PC-9 (cell line): ENCODE measurements at regions of chr3 and their contacts with region 1.

Region 1: GRCh38 chr3:129095285-129095684 is 26.3 kb downstream of the RAB43 start:
- DNase-seq: no peak
- H3K4me3 ChIP-seq: no peak overlapping the region
- H3K27ac ChIP-seq: no peak overlapping the region
- H3K4me1 ChIP-seq: no peaks in the 10 kb centered on the region
- H3K27me3 ChIP-seq: no peaks in the 10 kb centered on the region
- CTCF ChIP-seq: no peak

Region 2: DNA sequence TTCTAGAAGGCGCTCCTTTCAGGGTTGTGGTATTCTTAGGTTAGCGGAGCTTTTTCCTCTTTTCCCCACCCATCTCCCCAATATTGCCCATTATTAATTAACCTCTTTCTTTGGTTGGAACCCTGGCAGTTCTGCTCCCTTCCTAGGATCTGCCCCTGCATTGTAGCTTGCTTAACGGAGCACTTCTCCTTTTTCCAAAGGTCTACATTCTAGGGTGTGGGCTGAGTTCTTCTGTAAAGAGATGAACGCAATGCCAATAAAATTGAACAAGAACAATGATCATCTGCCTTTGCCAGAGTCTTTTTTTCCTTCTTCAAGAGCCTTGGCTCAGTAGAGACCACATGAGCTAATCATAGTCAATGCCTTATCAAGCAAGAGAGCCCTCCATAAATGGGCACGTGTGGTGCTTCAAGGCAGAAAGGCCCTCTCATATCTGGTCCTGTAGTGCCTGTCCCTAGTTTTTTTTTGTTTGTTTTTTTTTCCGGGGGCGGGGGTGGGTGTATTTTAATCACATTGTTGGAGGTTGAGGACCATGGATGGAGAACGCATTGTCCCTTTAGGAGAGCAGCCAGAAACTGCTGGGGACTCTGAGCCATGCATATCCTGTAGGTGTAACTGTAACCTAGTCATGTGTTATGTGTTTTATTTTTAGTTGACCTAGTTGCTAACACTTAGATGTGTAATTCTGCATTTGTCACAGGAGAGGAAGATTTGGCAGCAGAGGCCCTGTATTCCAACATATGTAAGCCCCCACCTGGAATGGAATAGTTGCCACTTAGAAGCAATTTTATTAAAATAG is 280.6 kb before region 1 on chr3:
- CTCF ChIA-PET with region 1: no interaction called
- POLR2A ChIA-PET with region 1: no interaction called
- intact Hi-C with region 1: no loop called
- DNase-seq: no peak
- H3K4me3 ChIP-seq: no peak overlapping the region
- H3K27ac ChIP-seq: no peak overlapping the region
- H3K4me1 ChIP-seq: no peaks in the 10 kb centered on the region
- H3K27me3 ChIP-seq: no peaks in the 10 kb centered on the region
- CTCF ChIP-seq: no peak

Region 3: DNA sequence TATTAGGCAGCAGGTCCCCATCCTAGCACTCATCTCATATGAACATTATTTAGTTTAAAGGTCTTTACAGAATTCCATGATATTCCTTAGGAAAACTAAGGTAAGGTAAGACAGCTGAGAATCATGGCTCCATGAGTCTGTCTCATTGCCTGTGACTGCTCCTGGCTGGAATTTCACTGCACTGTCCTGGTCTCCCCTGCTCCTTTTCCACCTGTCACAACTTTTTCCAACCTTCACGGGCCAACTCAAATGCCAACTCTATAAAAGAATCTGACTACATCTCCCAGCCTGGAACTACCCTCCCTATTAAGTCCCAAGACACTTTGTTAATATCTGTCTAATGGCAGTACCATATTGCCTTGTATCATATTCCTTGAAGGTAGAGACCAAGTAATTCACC is 80.8 kb after region 1 on chr3:
- CTCF ChIA-PET with region 1: interaction called, 10 read pairs
- POLR2A ChIA-PET with region 1: no interaction called
- intact Hi-C with region 1: no loop called
- DNase-seq: no peak
- H3K4me3 ChIP-seq: no peak overlapping the region
- H3K27ac ChIP-seq: no peak overlapping the region
- H3K4me1 ChIP-seq: peaks cover 22% of the 10 kb centered on the region
- H3K27me3 ChIP-seq: no peaks in the 10 kb centered on the region
- CTCF ChIP-seq: no peak

Region 4: GRCh38 chr3:129383292-129383860 is 288.1 kb after region 1 on chr3:
- CTCF ChIA-PET with region 1: no interaction called
- POLR2A ChIA-PET with region 1: no interaction called
- intact Hi-C with region 1: no loop called
- DNase-seq: peak; percentile 49 to 66
- H3K4me3 ChIP-seq: no peak overlapping the region
- H3K27ac ChIP-seq: no peak overlapping the region
- H3K4me1 ChIP-seq: peaks cover 6% of the 10 kb centered on the region
- H3K27me3 ChIP-seq: no peaks in the 10 kb centered on the region
- CTCF ChIP-seq: peak; percentile 85

Region 5: DNA sequence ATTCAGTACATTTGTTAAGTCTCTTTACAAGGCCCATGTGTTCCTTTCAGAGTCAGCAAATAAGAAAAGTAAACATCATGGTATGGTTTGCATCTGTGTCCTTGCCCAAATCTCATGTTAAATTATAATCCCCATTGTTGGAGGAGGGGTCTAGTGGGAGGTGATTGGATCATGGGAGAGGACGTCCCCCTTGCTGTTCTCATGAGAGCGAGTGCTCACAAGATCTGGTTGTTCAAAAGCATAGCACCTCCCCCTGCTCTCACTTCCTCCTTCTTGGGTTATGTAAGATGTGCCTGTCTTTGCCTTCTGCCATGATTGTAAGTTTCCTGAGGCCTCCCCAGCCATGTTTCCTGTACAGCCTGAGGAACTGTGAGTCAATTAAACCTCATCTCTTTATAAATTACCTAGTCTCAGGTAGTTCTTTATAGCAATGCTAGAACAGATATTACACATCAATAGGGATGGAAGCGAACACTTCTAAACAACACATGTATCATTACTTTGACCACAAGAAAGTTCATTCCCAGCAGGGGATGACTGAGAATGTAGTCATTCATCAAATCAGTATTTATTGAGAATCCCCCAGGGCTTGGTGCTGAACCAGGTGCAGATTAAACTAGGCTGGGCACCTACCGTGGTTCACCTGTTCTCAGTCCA is 329.0 kb after region 1 on chr3:
- CTCF ChIA-PET with region 1: interaction called, 28 read pairs
- POLR2A ChIA-PET with region 1: no interaction called
- intact Hi-C with region 1: no loop called
- DNase-seq: no peak
- H3K4me3 ChIP-seq: no peak overlapping the region
- H3K27ac ChIP-seq: no peak overlapping the region
- H3K4me1 ChIP-seq: peaks cover 12% of the 10 kb centered on the region; the same call in 1 of the 2 replicates
- H3K27me3 ChIP-seq: no peaks in the 10 kb centered on the region
- CTCF ChIP-seq: no peak

Region 6: DNA sequence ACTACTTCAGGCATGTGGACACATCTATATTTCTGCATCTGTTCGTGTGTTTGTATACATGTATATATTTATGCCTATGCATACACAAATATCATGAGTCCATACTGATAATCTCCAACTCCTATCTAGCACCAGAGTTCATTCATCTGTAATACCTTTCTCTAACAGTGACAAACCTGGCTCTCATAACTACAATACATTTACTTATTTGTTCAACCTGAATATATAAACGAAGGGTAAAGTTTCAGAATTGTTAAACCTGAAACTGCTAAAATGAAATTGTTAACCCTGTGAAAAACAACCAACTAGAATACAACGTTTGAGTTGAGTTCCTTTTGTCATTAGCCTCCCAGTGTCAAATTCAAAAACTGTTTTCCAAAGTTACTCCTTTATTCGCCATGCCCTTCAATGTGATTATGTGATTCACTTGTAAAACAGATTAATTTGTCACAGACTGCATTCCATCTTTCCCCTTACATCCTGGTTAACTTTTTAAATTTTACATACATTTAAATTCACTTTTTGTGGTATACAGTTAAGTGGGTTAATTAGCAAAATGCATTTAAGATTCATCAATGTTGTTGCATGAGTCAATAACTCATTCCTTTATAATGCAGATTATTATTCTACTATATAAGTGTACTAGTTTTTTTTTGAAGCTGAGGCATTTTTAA is 1592.9 kb after region 1 on chr3:
- CTCF ChIA-PET with region 1: no interaction called
- POLR2A ChIA-PET with region 1: no interaction called
- intact Hi-C with region 1: no loop called
- DNase-seq: no peak
- H3K4me3 ChIP-seq: no peak overlapping the region
- H3K27ac ChIP-seq: no peak overlapping the region
- H3K4me1 ChIP-seq: peaks cover 12% of the 10 kb centered on the region
- H3K27me3 ChIP-seq: no peaks in the 10 kb centered on the region
- CTCF ChIP-seq: no peak